Endothelial cell of umbilical vein (primary cell): ENCODE measurements at regions of chr5 and their contacts with region 1.

Region 1: GRCh38 chr5:72133212-72133990 is 26.1 kb downstream of the MAP1B start:
- DNase-seq: peak; percentile 86
- H3K4me3 ChIP-seq: peak overlapping the region in 1 of 3 experiments; percentile 42
- H3K27ac ChIP-seq: peak overlapping the region; percentile 92
- H3K4me1 ChIP-seq: peaks cover 93% of the 10 kb centered on the region
- H3K27me3 ChIP-seq: no peaks in the 10 kb centered on the region
- CTCF ChIP-seq: no peak
- POLR2A ChIP-seq: no peak

Region 2: GRCh38 chr5:72018146-72018803 is 115.1 kb before region 1 on chr5:
- CTCF ChIA-PET with region 1: no interaction called
- POLR2A ChIA-PET with region 1: no interaction called
- dilution Hi-C with region 1: no loop called
- intact Hi-C with region 1: loop called (anchors 1 kb)
- DNase-seq: peak; percentile 64
- H3K4me3 ChIP-seq: no peak overlapping the region
- H3K27ac ChIP-seq: no peak overlapping the region
- H3K4me1 ChIP-seq: no peaks in the 10 kb centered on the region
- H3K27me3 ChIP-seq: peaks cover 19 to 38% of the 10 kb centered on the region in 2 experiments
- CTCF ChIP-seq: peak; percentile 88 to 94
- POLR2A ChIP-seq: no peak

Region 3: GRCh38 chr5:72114629-72115028 is 18.8 kb before region 1 on chr5:
- CTCF ChIA-PET with region 1: interaction called, 6 read pairs
- POLR2A ChIA-PET with region 1: no interaction called
- dilution Hi-C with region 1: no loop called
- intact Hi-C with region 1: loop called (anchors 2 kb)
- DNase-seq: peak; percentile 53
- H3K4me3 ChIP-seq: no peak overlapping the region
- H3K27ac ChIP-seq: peak overlapping the region; percentile 15
- H3K4me1 ChIP-seq: peaks cover 54% of the 10 kb centered on the region
- H3K27me3 ChIP-seq: no peaks in the 10 kb centered on the region
- CTCF ChIP-seq: no peak
- POLR2A ChIP-seq: no peak

Region 4: DNA sequence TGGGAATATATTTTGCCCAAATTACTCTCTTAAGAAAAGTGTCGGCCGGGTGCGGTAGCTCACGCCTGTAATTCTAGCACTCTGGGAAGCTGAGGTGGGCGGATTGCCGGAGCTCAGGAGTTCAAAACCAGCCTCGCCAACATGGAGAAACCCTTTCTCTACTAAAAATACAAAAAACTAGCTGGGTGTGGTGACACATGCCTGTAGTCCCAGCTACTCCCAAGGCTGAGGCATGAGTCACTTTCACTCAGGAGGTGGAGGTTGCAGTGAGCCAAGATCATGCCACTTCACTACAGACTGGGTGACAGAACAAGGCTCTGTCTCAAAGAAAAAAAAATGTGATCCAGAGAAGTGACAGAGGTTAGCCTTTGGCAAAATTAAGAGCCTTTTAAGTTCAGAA is 960.5 kb after region 1 on chr5:
- CTCF ChIA-PET with region 1: no interaction called
- POLR2A ChIA-PET with region 1: no interaction called
- dilution Hi-C with region 1: no loop called
- intact Hi-C with region 1: no loop called
- DNase-seq: peak; percentile 8
- H3K4me3 ChIP-seq: no peak overlapping the region
- H3K27ac ChIP-seq: no peak overlapping the region
- H3K4me1 ChIP-seq: no peaks in the 10 kb centered on the region
- H3K27me3 ChIP-seq: no peaks in the 10 kb centered on the region
- CTCF ChIP-seq: no peak
- POLR2A ChIP-seq: no peak